ENCODE measurements at regions of chr5 and their contacts with region 1.

Region 1: GRCh38 chr5:175517818-175518450 is 39.6 kb downstream of the SFXN1 start:
- DNase-seq: peak; percentile 92
- ATAC-seq: peak; percentile 55
- H3K4me3 Mint-ChIP-seq: peak overlapping the region; percentile 54
- H3K27ac Mint-ChIP-seq: peak overlapping the region; percentile 98
- H3K4me1 Mint-ChIP-seq: peaks cover 95% of the 10 kb centered on the region
- H3K27me3 Mint-ChIP-seq: no peaks in the 10 kb centered on the region

Region 2: GRCh38 chr5:175378444-175379028 is 139.4 kb before region 1 on chr5:
- CTCF ChIA-PET with region 1: no interaction called
- POLR2A ChIA-PET with region 1: no interaction called
- intact Hi-C with region 1: no loop called
- DNase-seq: no peak
- ATAC-seq: no peak
- H3K4me3 Mint-ChIP-seq: no peak overlapping the region
- H3K27ac Mint-ChIP-seq: no peak overlapping the region
- H3K4me1 Mint-ChIP-seq: no peaks in the 10 kb centered on the region
- H3K27me3 Mint-ChIP-seq: peaks cover 32% of the 10 kb centered on the region

Region 3: DNA sequence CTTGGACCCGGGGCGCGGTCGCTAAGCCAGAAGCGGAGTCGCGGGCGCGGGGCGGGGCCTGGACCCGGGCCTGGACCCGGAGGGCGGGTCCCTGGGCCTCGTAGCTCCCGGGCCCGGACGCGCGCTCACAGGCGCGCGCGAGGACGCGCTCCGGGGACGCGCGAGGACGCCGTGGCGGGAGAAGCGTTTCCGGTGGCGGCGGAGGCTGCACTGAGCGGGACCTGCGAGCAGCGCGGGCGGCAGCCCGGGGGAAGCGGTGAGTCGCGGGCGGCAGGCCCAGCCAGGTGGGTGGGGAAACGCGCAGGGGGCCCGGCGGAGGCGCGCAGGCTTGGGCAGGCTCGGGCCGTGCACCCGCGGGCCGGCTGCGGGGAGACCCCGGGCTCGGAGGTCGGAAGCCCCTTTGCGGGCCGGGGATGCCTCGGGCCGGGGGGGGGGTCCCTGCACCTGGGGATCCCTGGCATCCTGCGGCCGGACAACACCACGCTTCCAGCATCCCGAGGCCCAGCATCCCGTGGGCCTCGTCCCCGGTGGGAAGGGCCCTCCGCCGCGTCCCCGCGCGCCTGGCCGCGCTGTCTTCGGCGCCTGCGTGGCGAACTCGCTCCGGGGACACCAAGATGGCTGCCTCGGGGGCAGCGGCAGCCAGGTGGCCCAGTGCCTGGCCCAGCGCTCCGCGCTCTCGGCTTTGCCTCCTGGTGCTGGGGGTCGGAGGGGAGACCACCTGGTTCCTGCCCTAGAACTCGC is 39.4 kb before region 1 on chr5 and contains the start of gene SFXN1:
- CTCF ChIA-PET with region 1: interaction called, 5 read pairs
- POLR2A ChIA-PET with region 1: interaction called, 10 read pairs
- intact Hi-C with region 1: loop called (anchors 1 to 2 kb)
- DNase-seq: peak; percentile 90
- ATAC-seq: peak; percentile 79
- H3K4me3 Mint-ChIP-seq: peak within 1 kb of the TSS; percentile 97
- H3K27ac Mint-ChIP-seq: peak within 1 kb of the TSS; percentile 99
- H3K4me1 Mint-ChIP-seq: peaks cover 47% of the 10 kb centered on the region
- H3K27me3 Mint-ChIP-seq: peaks cover 3% of the 10 kb centered on the region
- total RNA-seq, gene SFXN1: 322 to 433 TPM

Region 4: GRCh38 chr5:175494280-175495183 is 23.4 kb before region 1 on chr5:
- CTCF ChIA-PET with region 1: interaction called, 4 read pairs
- POLR2A ChIA-PET with region 1: no interaction called
- intact Hi-C with region 1: loop called in 1 of 2 experiments (anchors 2 kb)
- DNase-seq: peak; percentile 46
- ATAC-seq: peak; percentile 81
- H3K4me3 Mint-ChIP-seq: no peak overlapping the region
- H3K27ac Mint-ChIP-seq: peak overlapping the region; percentile 57
- H3K4me1 Mint-ChIP-seq: peaks cover 53% of the 10 kb centered on the region
- H3K27me3 Mint-ChIP-seq: no peaks in the 10 kb centered on the region

Region 5: GRCh38 chr5:175657593-175658271 is 139.8 kb after region 1 on chr5 and contains the start of gene HRH2:
- CTCF ChIA-PET with region 1: interaction called, 5 read pairs
- POLR2A ChIA-PET with region 1: interaction called, 4 read pairs
- intact Hi-C with region 1: loop called (anchors 1 kb)
- DNase-seq: peak; percentile 76
- ATAC-seq: peak; percentile 46
- H3K4me3 Mint-ChIP-seq: peak within 1 kb of the TSS; percentile 93
- H3K27ac Mint-ChIP-seq: peak within 1 kb of the TSS; percentile 94
- H3K4me1 Mint-ChIP-seq: peaks cover 75% of the 10 kb centered on the region
- H3K27me3 Mint-ChIP-seq: no peaks in the 10 kb centered on the region
- total RNA-seq, gene HRH2: 12.3 to 16.9 TPM

Region 6: GRCh38 chr5:175821790-175822211 is 303.9 kb after region 1 on chr5:
- CTCF ChIA-PET with region 1: no interaction called
- POLR2A ChIA-PET with region 1: no interaction called
- intact Hi-C with region 1: loop called in 1 of 2 experiments (anchors 1 kb)
- DNase-seq: peak; percentile 47
- ATAC-seq: peak; percentile 83
- H3K4me3 Mint-ChIP-seq: peak overlapping the region; percentile 6
- H3K27ac Mint-ChIP-seq: peak overlapping the region; percentile 58
- H3K4me1 Mint-ChIP-seq: peaks cover 14% of the 10 kb centered on the region
- H3K27me3 Mint-ChIP-seq: peaks cover 20% of the 10 kb centered on the region

Region 7: GRCh38 chr5:176361437-176362232 is 843.7 kb after region 1 on chr5 and contains the start of gene KIAA1191:
- CTCF ChIA-PET with region 1: no interaction called
- POLR2A ChIA-PET with region 1: no interaction called
- intact Hi-C with region 1: loop called in 1 of 2 experiments (anchors 5 kb)
- DNase-seq: peak; percentile 97
- ATAC-seq: peak; percentile 91
- H3K4me3 Mint-ChIP-seq: peak within 1 kb of the TSS; percentile 95
- H3K27ac Mint-ChIP-seq: peak within 1 kb of the TSS; percentile 94
- H3K4me1 Mint-ChIP-seq: peaks cover 32% of the 10 kb centered on the region
- H3K27me3 Mint-ChIP-seq: no peaks in the 10 kb centered on the region
- total RNA-seq, gene KIAA1191: 42.2 to 52.6 TPM

Region 8: GRCh38 chr5:176447982-176448608 is 930.2 kb after region 1 on chr5 and contains the start of gene FAF2:
- CTCF ChIA-PET with region 1: no interaction called
- POLR2A ChIA-PET with region 1: no interaction called
- intact Hi-C with region 1: loop called in 1 of 2 experiments (anchors 5 kb)
- DNase-seq: peak; percentile 98
- ATAC-seq: peak; percentile 98
- H3K4me3 Mint-ChIP-seq: peak within 1 kb of the TSS; percentile 90
- H3K27ac Mint-ChIP-seq: peak within 1 kb of the TSS; percentile 97
- H3K4me1 Mint-ChIP-seq: peaks cover 31% of the 10 kb centered on the region
- H3K27me3 Mint-ChIP-seq: no peaks in the 10 kb centered on the region
- total RNA-seq, gene FAF2: 37.6 to 44.8 TPM

Measured in activated CD4-positive, alpha-beta T cell treated with anti-CD3 and anti-CD28 coated beads for 36 hours (primary cell).